Colonic mucosa (tissue), 4 donors: ENCODE measurements at regions of chr1 and their contacts with region 1.

Region 1: GRCh38 chr1:77725706-77726105 is 33.9 kb downstream of the USP33 start:
- DNase-seq: no peak
- H3K4me3 ChIP-seq: no peak overlapping the region
- H3K27ac ChIP-seq: no peak overlapping the region
- H3K4me1 ChIP-seq: no peaks in the 10 kb centered on the region
- H3K27me3 ChIP-seq: no peaks in the 10 kb centered on the region
- CTCF ChIP-seq: no peak

Region 2: DNA sequence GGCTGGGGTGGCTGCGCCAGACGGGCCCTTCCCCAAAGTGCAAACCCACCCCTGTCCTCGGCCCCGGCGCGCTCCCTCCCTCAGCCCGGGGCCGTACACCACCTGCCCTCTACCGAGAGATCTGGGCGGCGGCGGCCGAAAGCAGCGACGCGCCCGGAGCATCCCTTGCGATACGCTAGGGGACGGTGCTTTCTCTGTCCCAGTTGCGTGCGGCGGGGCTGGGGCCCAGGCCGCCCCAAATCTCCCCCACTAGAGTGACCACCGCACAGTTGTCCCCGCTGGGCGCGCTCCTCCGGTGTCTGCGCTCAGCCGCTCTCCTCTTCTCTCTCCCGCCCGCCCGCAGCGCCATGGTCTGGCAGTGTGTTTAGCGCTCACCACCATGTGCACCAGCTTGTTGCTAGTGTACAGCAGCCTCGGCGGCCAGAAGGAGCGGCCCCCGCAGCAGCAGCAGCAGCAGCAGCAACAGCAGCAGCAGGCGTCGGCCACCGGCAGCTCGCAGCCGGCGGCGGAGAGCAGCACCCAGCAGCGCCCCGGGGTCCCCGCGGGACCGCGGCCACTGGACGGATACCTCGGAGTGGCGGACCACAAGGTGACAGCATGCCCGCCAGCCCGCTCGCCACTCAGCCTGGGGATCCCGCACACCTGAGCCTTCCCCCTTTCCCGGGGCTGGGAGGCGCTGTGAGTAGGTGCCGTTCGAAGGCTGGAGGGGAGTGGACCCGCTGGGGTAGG is 857.4 kb before region 1 on chr1:
- intact Hi-C with region 1: no loop called
- DNase-seq: no peak
- H3K4me3 ChIP-seq: peak overlapping the region; percentile 24
- H3K27ac ChIP-seq: no peak overlapping the region
- H3K4me1 ChIP-seq: no peaks in the 10 kb centered on the region
- H3K27me3 ChIP-seq: peaks cover 19% of the 10 kb centered on the region
- CTCF ChIP-seq: no peak

Region 3: DNA sequence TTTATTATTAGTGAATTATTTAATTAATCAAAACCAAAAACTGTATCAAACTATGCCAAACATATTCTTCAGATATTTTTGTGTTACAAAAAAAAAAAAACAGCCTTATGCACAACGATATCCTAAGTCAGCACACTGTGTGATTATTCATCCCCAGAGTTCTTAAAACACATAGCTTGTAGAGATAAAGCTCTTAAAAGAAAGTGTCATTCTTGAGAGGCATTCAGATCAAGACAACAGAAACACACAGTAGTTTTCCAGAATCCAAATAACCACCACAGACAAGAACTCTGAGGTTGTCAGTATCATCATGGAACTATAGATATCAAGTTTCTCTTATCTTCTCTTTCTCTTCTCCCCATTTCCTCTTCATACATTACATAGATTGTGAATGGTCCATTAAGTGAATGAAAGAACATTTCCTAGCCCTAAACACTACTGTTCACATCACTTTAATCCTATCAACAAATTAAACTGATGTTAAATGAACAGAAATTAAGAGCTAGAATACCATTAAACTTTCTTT is 56.7 kb before region 1 on chr1:
- intact Hi-C with region 1: no loop called
- DNase-seq: no peak
- H3K4me3 ChIP-seq: no peak overlapping the region
- H3K27ac ChIP-seq: no peak overlapping the region
- H3K4me1 ChIP-seq: no peaks in the 10 kb centered on the region
- H3K27me3 ChIP-seq: no peaks in the 10 kb centered on the region
- CTCF ChIP-seq: no peak

Region 4: DNA sequence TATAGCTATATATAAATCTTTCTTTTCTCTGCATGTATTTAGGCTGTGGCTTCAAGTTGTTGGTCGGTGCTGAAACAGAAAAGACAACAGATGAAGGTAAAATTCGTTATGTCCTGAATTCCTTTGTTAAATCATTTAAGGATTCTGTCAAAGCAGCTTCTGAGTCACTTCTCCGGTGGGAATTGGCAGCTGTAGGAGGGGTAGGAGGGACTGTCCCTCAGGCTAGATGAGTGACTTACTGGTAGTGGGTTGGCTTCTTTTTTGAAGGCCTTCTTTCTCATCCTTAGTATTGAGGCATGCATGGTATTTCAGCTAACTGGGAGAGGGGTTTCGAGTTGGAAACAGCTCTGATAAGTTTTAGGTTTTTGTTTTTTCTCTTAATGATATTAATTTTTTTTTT is 140.6 kb after region 1 on chr1:
- intact Hi-C with region 1: no loop called
- DNase-seq: no peak
- H3K4me3 ChIP-seq: no peak overlapping the region
- H3K27ac ChIP-seq: no peak overlapping the region
- H3K4me1 ChIP-seq: no peaks in the 10 kb centered on the region
- H3K27me3 ChIP-seq: no peaks in the 10 kb centered on the region
- CTCF ChIP-seq: no peak

Region 5: DNA sequence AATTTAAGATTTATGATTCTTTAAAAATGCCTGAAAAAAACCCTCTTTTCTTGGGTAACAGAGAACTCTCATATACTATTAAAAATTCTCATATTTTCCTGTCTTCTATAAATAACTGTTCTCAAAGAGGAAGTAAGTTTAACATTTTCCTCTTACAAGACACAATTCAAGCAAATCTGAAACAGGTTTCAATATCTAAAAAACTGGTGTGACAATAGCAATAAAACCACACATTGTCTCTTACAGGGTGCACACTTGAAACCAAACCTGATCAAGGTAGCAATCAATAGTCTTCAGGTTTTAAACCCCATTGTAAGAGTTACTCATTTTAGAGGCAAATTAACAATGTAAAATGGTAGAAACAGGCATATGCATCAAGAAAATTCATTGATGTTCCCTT is 225.2 kb after region 1 on chr1:
- intact Hi-C with region 1: loop called (anchors 10 kb)
- DNase-seq: no peak
- H3K4me3 ChIP-seq: no peak overlapping the region
- H3K27ac ChIP-seq: no peak overlapping the region
- H3K4me1 ChIP-seq: no peaks in the 10 kb centered on the region
- H3K27me3 ChIP-seq: no peaks in the 10 kb centered on the region
- CTCF ChIP-seq: no peak

Region 6: GRCh38 chr1:78229344-78229743 is 503.6 kb after region 1 on chr1:
- intact Hi-C with region 1: no loop called
- DNase-seq: no peak
- H3K4me3 ChIP-seq: no peak overlapping the region
- H3K27ac ChIP-seq: no peak overlapping the region
- H3K4me1 ChIP-seq: no peaks in the 10 kb centered on the region
- H3K27me3 ChIP-seq: no peaks in the 10 kb centered on the region
- CTCF ChIP-seq: no peak